ENCODE measurements at regions of chr11 and their contacts with region 1.

Region 1: GRCh38 chr11:6682936-6683861 is at the start of gene MRPL17:
- DNase-seq: peak; percentile 98

Region 2: GRCh38 chr11:6603287-6604080 is 79.7 kb before region 1 on chr11 and contains the starts of genes ILK and RRP8:
- CTCF ChIA-PET with region 1: no interaction called
- POLR2A ChIA-PET with region 1: interaction called, 16 read pairs
- DNase-seq: peak; percentile 91

Region 3: GRCh38 chr11:6612213-6613041 is 70.8 kb before region 1 on chr11 and contains the start of gene TAF10:
- CTCF ChIA-PET with region 1: no interaction called
- POLR2A ChIA-PET with region 1: interaction called, 39 read pairs
- DNase-seq: peak; percentile 90

Region 4: DNA sequence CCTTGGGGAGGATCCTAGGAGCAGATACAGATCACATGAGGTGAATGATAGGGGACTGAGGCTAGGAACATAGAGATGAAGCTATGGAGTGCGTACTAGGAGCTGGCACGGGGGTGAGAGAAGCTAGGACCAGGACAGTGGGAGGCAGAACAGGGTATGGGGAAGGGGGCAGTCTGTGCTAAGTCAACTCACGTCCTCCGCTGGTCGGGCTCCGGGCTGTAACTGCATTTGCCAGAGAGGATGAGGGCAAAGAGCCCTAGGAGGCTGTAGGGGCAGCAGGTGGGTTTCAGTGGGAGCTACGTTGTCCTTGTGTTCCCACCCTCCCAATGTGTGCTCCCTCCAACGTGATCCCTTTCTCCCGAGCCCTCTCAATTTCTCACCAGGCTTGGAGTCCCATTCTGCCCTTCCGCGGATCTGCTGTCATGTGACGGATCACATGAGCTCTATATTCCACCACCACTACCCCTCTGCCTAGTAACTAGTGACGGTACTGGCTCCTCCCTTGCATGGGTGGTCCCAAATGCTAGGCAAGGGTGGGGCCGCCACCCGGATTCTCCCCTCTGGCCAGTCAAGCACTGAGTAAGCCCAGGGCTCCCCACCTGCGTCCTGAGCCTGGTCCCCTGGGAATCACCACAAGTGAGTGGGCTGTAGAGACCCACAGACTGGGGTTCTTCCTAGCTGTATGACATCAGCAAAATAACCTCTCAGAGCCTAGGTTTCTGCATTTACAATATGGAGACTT is 64.0 kb before region 1 on chr11 and contains the start of gene TPP1:
- CTCF ChIA-PET with region 1: no interaction called
- POLR2A ChIA-PET with region 1: interaction called, 39 read pairs
- DNase-seq: peak; percentile 97

Region 5: GRCh38 chr11:6650104-6650503 is 33.1 kb before region 1 on chr11:
- CTCF ChIA-PET with region 1: interaction called, 3 read pairs
- POLR2A ChIA-PET with region 1: interaction called, 10 read pairs
- DNase-seq: no peak